ENCODE measurements at regions of chr19 and their contacts with region 1.

Region 1: DNA sequence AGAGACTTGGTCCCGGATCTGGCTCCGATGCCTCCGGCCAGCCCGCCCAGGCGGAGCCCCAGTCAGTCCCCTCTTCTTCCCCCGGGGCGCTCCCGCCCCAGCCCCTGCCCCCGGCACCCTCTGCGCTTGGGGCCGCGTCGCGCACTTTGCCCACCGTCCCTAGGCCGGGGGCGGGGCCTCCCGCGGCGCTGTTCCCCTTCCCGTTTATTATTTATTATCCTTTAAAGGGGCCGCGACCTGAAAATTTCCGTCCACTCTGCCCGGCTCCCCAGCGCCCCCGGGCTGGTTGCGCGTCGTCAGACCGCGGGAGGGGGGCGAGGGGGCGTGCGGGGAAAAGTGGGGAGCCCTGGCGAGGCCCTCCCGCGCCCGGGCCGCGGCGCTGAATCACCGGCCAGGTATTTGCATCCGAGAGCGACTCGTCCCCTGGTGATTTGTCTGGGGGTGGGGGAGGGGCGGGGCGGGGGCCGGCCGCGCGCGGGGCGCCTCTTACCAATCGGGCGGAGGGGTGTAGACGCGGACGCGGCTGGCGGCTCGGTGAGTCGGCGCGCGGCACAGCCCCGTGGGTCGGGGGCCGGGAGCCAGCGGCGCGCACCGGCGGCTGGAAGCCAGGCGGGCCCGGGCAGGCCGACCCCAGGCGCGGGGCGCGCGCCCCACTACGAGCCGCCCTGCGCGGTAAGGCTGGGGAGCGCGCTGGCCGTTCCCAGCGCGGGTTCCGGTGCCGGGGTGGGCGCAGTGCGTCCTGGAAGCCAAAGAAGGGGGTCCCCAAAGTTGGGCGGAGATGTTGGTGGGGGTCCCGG is at the start of gene ARID3A:
- DNase-seq: peak; percentile 32
- H3K4me3 ChIP-seq: peak within 1 kb of the TSS; percentile 91
- H3K27me3 ChIP-seq: no peaks in the 10 kb centered on the region
- CTCF ChIP-seq: no peak
- polyA plus RNA-seq, gene ARID3A: 10.7 and 17.4 TPM in 2 replicates

Region 2: GRCh38 chr19:861763-862580 is 63.8 kb before region 1 on chr19:
- CTCF ChIA-PET with region 1: interaction called, 23 read pairs
- POLR2A ChIA-PET with region 1: no interaction called
- DNase-seq: no peak
- H3K4me3 ChIP-seq: no peak overlapping the region
- H3K27me3 ChIP-seq: no peaks in the 10 kb centered on the region
- CTCF ChIP-seq: peak; percentile 28; the same call in 1 of the 2 replicates

Region 3: GRCh38 chr19:977058-977692 is 51.5 kb after region 1 on chr19:
- CTCF ChIA-PET with region 1: interaction called, 102 read pairs
- POLR2A ChIA-PET with region 1: no interaction called
- DNase-seq: no peak
- H3K4me3 ChIP-seq: no peak overlapping the region
- H3K27me3 ChIP-seq: no peaks in the 10 kb centered on the region
- CTCF ChIP-seq: no peak

Measured in BJ (cell line).